ENCODE measurements at regions of chrX and their contacts with region 1.

Region 1: DNA sequence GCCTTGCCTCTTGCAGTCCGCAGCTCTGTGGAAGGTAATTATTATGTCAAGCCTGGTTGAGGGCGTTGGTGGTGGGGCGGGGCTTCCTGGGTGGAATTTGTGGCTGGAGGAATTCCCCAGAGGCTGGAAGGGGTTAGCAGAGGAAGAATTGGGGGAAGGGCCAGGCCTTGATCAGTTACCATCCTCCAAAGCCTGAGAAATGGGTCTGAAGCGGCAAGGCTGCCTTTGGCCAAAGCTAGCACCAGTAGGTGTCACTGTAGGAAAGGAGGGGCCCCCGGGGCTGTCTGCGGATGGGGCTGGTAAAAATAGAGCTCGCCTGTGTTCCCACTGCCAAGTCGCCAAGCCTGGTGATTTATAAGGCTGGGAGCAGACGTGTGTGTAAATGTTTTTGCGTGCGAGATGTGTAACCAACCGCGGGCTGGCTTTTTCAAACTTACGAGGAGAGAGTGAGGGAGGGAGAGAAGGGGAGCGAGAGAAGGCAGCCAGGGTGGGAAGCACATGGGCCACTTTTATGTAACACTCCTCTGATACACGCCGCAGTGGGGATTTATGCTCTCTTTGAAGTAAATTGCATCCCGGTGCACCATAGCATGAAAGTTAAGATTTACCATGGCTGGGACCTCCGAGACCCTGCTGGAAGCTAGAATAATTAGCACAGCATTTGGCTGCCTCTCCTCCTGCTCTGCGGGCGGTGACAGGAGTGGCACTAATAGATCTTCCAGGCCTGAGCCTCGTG is 366.9 kb downstream of the BCOR start:
- DNase-seq: peak; percentile 74
- ATAC-seq: peak; percentile 91
- H3K4me3 ChIP-seq: 0 out of 2 replicates have a peak overlapping the region, but pooled peaks have one; percentile 4
- H3K27ac ChIP-seq: 0 out of 2 replicates have a peak overlapping the region, but pooled peaks have one; percentile 22
- H3K4me1 ChIP-seq: peaks cover 36% of the 10 kb centered on the region
- H3K27me3 ChIP-seq: no peaks in the 10 kb centered on the region
- CTCF ChIP-seq: peak; percentile 82

Region 2: DNA sequence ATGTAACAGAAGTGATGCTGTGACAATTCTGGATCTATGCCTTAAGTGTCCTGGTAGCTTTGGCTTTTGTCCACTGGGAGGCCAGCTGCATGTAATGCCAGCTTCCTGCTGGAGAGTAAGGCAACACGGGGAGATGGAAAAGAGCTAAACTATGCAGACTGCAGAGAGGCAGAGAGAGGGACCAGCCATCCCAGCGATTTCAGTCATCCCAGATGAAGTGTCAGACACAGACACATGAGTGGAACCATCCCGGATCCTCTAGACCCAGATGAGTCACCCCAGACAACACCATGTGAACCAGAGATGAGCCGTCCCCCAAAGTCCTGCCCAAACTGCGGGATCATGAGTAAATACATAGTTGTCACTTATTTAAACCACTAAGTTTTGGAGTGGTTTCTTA is 1524.8 kb before region 1 on chrX:
- CTCF ChIA-PET with region 1: no interaction called
- POLR2A ChIA-PET with region 1: no interaction called
- intact Hi-C with region 1: no loop called
- DNase-seq: no peak
- ATAC-seq: no peak
- H3K4me3 ChIP-seq: no peak overlapping the region
- H3K27ac ChIP-seq: no peak overlapping the region
- H3K4me1 ChIP-seq: no peaks in the 10 kb centered on the region
- H3K27me3 ChIP-seq: no peaks in the 10 kb centered on the region
- CTCF ChIP-seq: no peak

Region 3: DNA sequence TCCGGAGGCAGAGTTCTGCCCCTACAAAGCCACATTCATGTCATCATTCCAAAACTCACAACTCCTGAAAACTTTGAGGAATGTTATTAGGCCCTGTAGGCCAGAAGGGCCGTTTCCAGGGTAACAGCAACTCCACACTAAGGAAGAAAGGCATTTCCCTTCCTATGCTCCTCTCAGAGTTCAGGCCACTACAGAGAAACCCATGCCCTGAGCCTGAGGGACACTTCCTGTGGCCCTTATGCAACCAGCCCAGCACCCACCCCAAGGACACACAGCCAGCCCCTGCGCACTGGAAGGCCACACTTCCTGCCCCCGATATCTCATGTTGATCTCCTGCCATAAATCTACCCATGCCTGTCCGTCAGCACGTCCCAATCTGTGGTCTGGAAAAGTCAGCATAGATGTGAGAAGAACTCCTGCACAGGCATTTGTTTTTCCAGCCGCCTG is 77.7 kb after region 1 on chrX:
- CTCF ChIA-PET with region 1: no interaction called
- POLR2A ChIA-PET with region 1: interaction called, 3 read pairs
- intact Hi-C with region 1: loop called (anchors 10 kb)
- DNase-seq: peak; percentile 32
- ATAC-seq: no peak
- H3K4me3 ChIP-seq: no peak overlapping the region
- H3K27ac ChIP-seq: peak overlapping the region; percentile 48
- H3K4me1 ChIP-seq: peaks cover 24% of the 10 kb centered on the region
- H3K27me3 ChIP-seq: no peaks in the 10 kb centered on the region
- CTCF ChIP-seq: no peak

Region 4: DNA sequence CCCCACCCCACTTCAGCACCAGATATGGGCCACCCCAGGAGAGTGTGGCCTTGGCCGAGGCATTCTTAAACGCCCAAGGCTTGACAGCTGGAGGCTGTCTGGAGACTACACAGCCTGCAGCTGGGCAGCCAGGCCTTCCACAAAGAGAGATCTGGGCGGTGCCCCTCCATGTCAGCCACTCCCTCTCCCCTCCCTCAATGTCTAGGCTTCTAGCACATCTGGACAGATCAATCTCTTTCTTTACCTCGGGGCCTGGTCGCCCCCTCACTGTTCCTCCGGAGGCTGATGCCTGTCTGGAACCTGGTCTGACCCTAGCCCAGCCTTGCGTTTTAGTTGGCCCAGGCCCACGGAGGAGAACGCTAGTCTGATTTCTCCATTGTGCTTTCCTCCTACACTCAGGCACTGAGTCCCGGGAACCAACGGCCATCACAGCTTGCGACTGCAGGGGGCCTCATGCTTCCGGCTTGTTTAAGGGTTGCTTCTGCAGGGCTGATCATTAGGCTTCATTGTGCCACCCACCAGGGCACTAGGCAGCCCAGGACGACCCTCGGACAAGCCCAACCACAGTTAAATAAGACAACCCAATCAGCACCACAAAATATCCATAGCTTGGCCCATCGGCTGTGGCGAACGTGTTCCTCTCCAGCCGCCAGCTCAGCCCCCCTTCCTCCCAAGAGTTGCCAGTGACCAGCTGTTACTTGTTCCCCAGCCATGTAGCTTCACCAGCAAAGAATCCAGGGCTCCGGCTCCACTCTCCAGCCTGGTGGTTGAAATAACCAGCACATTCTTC is 166.3 kb after region 1 on chrX:
- CTCF ChIA-PET with region 1: interaction called, 6 read pairs
- POLR2A ChIA-PET with region 1: no interaction called
- intact Hi-C with region 1: loop called (anchors 5 kb)
- DNase-seq: peak; percentile 72
- ATAC-seq: peak; percentile 31
- H3K4me3 ChIP-seq: no peak overlapping the region; the same call in 1 of the 2 replicates
- H3K27ac ChIP-seq: peak overlapping the region; percentile 90
- H3K4me1 ChIP-seq: peaks cover 52% of the 10 kb centered on the region
- H3K27me3 ChIP-seq: no peaks in the 10 kb centered on the region
- CTCF ChIP-seq: no peak

Region 5: DNA sequence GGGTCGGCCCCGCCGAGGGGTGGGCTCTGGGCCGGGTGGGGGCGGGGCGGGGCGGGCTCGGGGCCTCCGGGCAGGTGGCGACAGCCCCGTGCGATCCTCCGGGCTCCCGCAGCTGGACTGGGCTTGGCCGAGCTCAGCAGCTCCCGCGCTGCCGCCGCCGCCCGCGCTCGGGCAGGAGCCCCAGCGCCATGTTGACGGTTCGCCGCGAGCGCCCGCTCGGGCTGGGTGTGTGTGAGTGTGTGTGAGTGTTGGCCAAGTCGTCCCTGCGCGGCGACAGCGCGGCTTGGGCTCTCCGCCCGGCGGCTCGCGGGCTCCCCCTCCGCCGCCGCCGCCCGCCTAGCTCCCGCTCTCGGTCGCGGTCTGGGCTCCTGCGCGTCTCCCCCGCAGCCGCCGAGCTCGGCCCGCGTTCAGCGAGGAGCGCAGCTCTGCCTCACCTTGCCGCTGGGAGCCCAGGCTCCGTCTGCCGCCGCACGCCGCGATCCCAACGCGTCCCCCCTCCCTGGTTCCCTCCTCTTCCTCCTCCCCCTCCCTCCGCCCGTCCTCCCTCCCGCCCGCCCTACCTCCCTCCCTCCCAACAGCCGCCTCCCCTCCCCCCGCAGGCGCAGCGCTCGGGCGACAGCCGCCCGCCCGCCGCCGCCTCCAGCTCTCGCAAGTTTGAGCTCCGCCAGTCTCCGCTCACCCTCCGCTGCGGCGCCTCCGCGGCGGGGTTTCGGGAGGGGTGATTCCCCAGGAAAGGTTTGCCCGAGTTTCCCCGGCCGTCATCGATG is 366.9 kb after region 1 on chrX and contains the start of gene BCOR:
- CTCF ChIA-PET with region 1: interaction called, 3 read pairs
- POLR2A ChIA-PET with region 1: interaction called, 5 read pairs
- intact Hi-C with region 1: loop called (anchors 5 kb)
- DNase-seq: peak; percentile 62
- ATAC-seq: peak; percentile 19
- H3K4me3 ChIP-seq: peak within 1 kb of the TSS; percentile 92
- H3K27ac ChIP-seq: no peak within 1 kb of the TSS
- H3K4me1 ChIP-seq: peaks cover 34% of the 10 kb centered on the region
- H3K27me3 ChIP-seq: no peaks in the 10 kb centered on the region
- CTCF ChIP-seq: no peak
- total RNA-seq, gene BCOR: 21.8 and 41.9 TPM in 2 replicates

Region 6: GRCh38 chrX:40169193-40170101 is 438.6 kb after region 1 on chrX:
- CTCF ChIA-PET with region 1: no interaction called
- POLR2A ChIA-PET with region 1: no interaction called
- intact Hi-C with region 1: loop called (anchors 5 kb)
- DNase-seq: peak; percentile 85
- ATAC-seq: peak; percentile 39
- H3K4me3 ChIP-seq: peak overlapping the region; percentile 63
- H3K27ac ChIP-seq: no peak overlapping the region
- H3K4me1 ChIP-seq: peaks cover 38% of the 10 kb centered on the region
- H3K27me3 ChIP-seq: no peaks in the 10 kb centered on the region
- CTCF ChIP-seq: peak; percentile 71

Measured in PC-3 (cell line).